GM13976 (cell line): ENCODE measurements at regions of chr20 and their contacts with region 1.

Region 1: DNA sequence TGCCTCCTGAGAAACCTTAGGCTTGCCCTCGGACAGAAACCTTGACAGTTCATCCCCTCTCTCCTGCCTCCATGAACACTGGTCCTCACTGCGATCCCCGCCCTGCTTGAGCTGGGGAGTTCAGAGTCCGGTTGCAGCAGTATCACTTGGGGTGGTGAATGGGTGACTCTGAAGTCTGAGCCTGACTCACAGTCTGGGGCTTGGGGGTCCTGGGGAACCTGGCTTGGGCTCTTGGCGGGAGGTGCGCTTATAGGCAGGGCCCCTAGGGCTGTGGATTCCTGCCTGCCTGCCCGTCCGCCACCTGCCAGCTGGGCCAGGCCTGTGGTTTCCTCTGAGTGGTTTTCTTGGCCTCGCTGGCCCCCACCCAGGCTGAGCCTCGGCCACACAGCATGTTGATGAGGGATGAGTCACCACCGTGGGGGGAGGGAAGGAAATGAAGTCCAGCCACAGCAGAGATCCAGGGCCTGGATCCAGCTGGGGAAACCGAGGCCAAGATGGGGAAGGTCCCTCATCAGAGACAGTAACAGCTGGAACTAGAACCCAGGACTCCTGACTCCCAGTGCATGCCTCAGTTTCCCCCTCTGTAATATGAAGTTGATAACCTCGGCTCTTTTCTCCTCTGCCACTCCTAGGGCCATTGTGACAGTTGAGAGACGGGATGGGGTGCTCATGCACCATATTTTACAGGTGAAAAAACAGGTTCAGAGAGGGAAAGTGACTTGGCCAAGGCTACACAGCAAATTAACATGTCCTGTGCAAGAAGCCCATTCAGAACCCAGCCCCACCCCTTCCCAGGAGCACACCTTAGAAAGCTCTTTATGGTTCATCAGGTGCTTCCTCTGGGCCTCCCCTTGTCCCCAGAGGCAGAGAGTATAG is 9.2 kb downstream of the FOXS1 start:
- DNase-seq: peak; percentile 70
- CTCF ChIP-seq: no peak

Region 2: GRCh38 chr20:31987744-31988143 is 151.5 kb after region 1 on chr20:
- in situ Hi-C with region 1: no loop called
- DNase-seq: no peak
- CTCF ChIP-seq: no peak

Region 3: GRCh38 chr20:32031007-32031958 is 195.1 kb after region 1 on chr20:
- in situ Hi-C with region 1: loop called (anchors 10 kb)
- DNase-seq: peak; percentile 68
- CTCF ChIP-seq: peak; percentile 63

Region 4: DNA sequence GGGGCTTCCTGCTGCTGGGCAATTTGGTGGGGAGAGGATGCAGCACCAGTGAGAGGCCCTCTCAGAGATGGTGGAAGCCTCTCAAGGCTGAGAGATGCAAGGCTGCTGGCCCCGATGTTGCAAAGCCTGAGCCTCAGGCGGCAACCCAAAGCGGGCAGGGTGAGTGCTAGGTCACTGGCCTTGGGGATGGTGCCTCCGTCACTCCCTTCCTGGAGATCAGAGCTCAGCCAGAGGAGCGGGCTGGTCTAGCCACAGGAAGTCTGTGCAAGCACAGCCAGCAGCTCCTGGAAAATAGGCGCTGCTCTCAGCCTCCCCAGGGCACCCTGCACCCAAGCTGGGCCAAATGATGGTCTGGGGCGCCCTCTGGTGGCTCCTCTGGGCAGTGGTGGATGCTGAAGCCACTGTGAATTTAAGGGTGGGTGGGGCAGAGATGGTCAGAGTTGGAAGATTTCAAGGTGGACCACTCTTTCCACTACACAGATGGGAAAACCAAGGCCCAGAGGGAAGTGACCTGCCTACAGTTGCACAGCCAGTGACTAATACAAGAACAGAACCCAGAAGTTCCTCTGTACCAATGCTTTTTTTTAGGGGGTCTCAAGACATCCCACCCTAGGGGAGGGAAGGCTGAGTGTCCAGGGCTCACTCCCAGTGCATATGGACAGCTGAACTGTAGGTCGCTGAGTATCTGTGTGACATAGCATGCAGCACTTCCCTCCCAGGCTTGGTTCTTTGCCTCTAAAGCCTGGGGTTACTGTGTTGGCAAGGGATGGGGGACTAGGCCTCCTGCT is 816.7 kb after region 1 on chr20:
- in situ Hi-C with region 1: loop called (anchors 25 kb)
- DNase-seq: peak; percentile 90
- CTCF ChIP-seq: peak; percentile 93